PC-3 (cell line): ENCODE measurements at regions of chr3 and their contacts with region 1.

Region 1: DNA sequence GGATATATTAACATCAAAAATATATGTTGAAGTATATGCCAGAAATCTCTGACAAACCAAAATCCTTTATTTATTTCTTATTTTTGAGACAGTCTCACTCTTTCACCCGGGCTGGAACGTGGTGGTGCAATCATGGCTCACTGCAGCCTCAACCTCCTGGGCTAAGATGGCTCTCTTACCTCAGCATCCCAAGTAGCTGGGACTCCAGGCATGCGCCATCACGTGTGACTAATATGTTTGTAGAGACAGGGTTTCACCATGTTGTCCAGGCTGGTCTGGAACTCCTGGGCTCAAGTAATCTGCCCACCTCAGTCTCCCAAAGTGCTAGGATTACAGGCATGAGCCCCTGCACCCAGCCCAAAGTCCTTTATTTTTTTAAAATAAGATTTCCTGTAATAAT is 11.9 kb downstream of the FAIM start:
- DNase-seq: no peak
- ATAC-seq: no peak
- H3K4me3 ChIP-seq: no peak overlapping the region
- H3K27ac ChIP-seq: no peak overlapping the region
- H3K4me1 ChIP-seq: peaks cover 4% of the 10 kb centered on the region
- H3K27me3 ChIP-seq: no peaks in the 10 kb centered on the region
- CTCF ChIP-seq: no peak

Region 2: GRCh38 chr3:138347960-138348753 is 272.3 kb before region 1 on chr3 and contains the start of gene MRAS:
- CTCF ChIA-PET with region 1: no interaction called
- POLR2A ChIA-PET with region 1: no interaction called
- intact Hi-C with region 1: no loop called
- DNase-seq: peak; percentile 57
- ATAC-seq: peak; percentile 78
- H3K4me3 ChIP-seq: peak within 1 kb of the TSS; percentile 84
- H3K27ac ChIP-seq: no peak within 1 kb of the TSS
- H3K4me1 ChIP-seq: no peaks in the 10 kb centered on the region
- H3K27me3 ChIP-seq: no peaks in the 10 kb centered on the region
- CTCF ChIP-seq: peak; percentile 39; the same call in 1 of the 2 replicates
- total RNA-seq, gene MRAS: 2.8 and 5.3 TPM in 2 replicates

Region 3: DNA sequence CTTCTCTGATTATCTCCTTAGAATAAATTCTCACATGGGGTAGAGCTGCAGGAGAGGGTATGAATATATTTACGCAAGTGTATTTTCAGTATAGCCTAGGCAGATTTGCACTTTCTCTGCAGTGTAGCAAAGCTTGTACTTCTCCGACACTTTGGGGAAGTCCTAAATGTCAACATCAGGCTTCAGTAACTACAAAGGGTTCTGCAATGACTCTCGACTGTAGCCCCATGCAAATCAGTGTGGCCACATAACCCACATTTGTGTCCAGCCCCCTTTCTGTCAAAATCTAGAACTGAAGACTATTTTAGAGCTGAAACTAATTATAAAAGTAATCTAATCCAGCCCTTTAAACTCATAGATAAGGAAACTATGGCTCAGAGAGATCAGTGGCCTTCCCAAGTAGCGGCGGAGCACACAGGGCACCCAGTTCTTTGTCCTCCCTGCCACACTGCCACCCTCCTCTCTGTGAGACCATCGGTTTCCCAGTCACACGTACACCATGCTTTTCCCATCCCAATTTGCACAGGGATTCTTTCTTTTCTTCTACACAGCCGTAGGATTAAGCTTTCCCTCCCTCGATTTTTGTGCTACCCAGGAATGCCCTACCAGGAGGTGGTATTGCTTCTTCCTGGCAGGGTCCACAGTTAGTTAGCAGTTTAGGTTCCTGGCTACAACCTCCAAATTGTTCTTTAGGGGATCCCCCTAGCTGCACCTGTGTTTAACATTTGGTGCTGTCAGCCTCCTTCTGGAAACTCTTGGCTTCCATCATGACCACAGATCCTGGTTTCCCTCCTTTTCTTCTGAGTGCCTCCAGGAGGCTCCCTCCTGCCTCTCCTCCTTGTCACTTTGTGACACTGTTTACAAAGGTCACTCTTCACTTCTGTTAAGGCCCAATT is 249.1 kb before region 1 on chr3:
- CTCF ChIA-PET with region 1: no interaction called
- POLR2A ChIA-PET with region 1: no interaction called
- intact Hi-C with region 1: no loop called
- DNase-seq: no peak
- ATAC-seq: no peak
- H3K4me3 ChIP-seq: no peak overlapping the region
- H3K27ac ChIP-seq: no peak overlapping the region
- H3K4me1 ChIP-seq: no peaks in the 10 kb centered on the region
- H3K27me3 ChIP-seq: no peaks in the 10 kb centered on the region
- CTCF ChIP-seq: no peak

Region 4: GRCh38 chr3:138681463-138682220 is 61.2 kb after region 1 on chr3:
- CTCF ChIA-PET with region 1: no interaction called
- POLR2A ChIA-PET with region 1: no interaction called
- intact Hi-C with region 1: loop called (anchors 2 kb)
- DNase-seq: no peak
- ATAC-seq: no peak
- H3K4me3 ChIP-seq: no peak overlapping the region
- H3K27ac ChIP-seq: no peak overlapping the region
- H3K4me1 ChIP-seq: peaks cover 4% of the 10 kb centered on the region
- H3K27me3 ChIP-seq: no peaks in the 10 kb centered on the region
- CTCF ChIP-seq: no peak